H1 (cell line): ENCODE measurements at regions of chr9 and their contacts with region 1.

Region 1: GRCh38 chr9:4588721-4589120 is 73.4 kb upstream of the PLPP6 start:
- DNase-seq: no peak
- H3K4me3 ChIP-seq: no peak overlapping the region
- H3K27ac ChIP-seq: no peak overlapping the region
- H3K4me1 ChIP-seq: peaks cover 0 to 5% (median 0%) of the 10 kb centered on the region in 4 experiments; a peak in 1 of 7 replicates
- H3K27me3 ChIP-seq: no peaks in the 10 kb centered on the region
- CTCF ChIP-seq: no peak
- EP300 ChIP-seq: no peak
- POLR2A ChIP-seq: no peak
- RAD21 ChIP-seq: no peak

Region 2: GRCh38 chr9:4563105-4563504 is 25.6 kb before region 1 on chr9:
- CTCF ChIA-PET with region 1: no interaction called
- POLR2A ChIA-PET with region 1: no interaction called
- DNase-seq: no peak
- H3K4me3 ChIP-seq: no peak overlapping the region
- H3K27ac ChIP-seq: no peak overlapping the region
- H3K4me1 ChIP-seq: no peaks in the 10 kb centered on the region
- H3K27me3 ChIP-seq: no peaks in the 10 kb centered on the region
- CTCF ChIP-seq: no peak
- EP300 ChIP-seq: no peak
- POLR2A ChIP-seq: no peak
- RAD21 ChIP-seq: no peak

Region 3: DNA sequence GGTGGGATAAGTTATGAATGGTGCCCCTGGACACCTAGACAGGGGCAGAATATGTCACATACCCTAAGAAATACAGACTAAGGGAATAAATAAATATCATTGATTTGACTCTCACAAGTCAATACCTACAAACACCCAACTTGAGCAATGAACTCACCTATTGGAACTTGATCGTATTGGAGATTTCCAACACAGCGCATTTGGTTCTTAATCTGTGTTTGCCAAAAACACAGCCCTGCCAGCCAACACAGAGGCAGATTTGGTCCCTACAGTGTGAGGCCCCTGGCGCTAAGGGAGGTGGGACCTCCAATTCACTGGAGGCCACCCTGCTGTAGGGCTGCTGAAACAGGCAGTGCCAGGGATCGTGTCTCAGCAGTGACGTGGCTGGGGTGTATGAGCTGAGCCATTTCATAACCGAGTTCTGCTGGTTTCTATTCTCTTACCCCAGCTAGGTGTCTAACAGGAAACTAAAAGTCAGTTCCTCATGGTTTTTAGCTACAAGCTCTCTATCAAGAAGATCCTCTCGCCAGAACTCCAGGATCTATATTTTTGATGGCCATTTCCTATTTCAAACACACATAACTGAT is 14.0 kb before region 1 on chr9:
- CTCF ChIA-PET with region 1: interaction called, 10 read pairs
- POLR2A ChIA-PET with region 1: interaction called, 3 read pairs
- DNase-seq: no peak
- H3K4me3 ChIP-seq: no peak overlapping the region
- H3K27ac ChIP-seq: no peak overlapping the region; the same call in 1 of the 2 replicates
- H3K4me1 ChIP-seq: no peaks in the 10 kb centered on the region; a peak in 2 of 7 replicates
- H3K27me3 ChIP-seq: no peaks in the 10 kb centered on the region
- CTCF ChIP-seq: no peak
- EP300 ChIP-seq: no peak
- POLR2A ChIP-seq: no peak
- RAD21 ChIP-seq: no peak

Region 4: GRCh38 chr9:4662108-4662988 is 73.6 kb after region 1 on chr9 and contains the start of gene PLPP6:
- CTCF ChIA-PET with region 1: no interaction called
- POLR2A ChIA-PET with region 1: no interaction called
- DNase-seq: peak; percentile 90 to 91
- H3K4me3 ChIP-seq: peak within 1 kb of the TSS; percentile 46 to 84 (median 82)
- H3K27ac ChIP-seq: no peak within 1 kb of the TSS
- H3K4me1 ChIP-seq: peaks cover 4 to 23% (median 9%) of the 10 kb centered on the region in 4 experiments
- H3K27me3 ChIP-seq: no peaks in the 10 kb centered on the region
- CTCF ChIP-seq: peak; percentile 55 to 58 (median 56)
- EP300 ChIP-seq: peak in 1 of 2 experiments; percentile 17; a peak in 2 of 3 replicates
- POLR2A ChIP-seq: peak; percentile 34 to 70
- RAD21 ChIP-seq: peak; percentile 53 to 61
- total RNA-seq, gene PLPP6: 12.0 and 13.3 TPM in 2 replicates